Posterior vena cava (tissue), 2 donors: ENCODE measurements at regions of chr1 and their contacts with region 1.

Region 1: DNA sequence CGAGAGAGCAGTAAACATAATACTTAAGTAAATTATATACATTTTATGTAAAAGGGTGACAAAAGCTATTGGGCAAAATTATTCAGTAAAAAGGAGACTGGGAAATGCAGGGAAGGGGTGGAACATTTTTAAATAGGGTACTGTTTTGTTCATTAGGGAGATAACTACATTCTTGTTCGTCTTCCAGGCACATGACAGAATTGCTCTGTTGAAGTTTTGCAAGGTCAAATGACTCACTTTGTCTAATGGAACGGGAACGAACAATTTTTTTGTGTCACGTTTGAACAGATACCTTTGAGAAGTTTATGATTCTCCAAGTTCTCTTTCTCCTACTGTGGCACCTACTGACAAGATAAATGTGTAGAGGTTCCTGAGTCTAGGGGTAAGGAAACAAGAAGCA is 382.3 kb upstream of the ZRANB2 start:
- DNase-seq: no peak

Region 2: GRCh38 chr1:71157151-71157550 is 306.0 kb before region 1 on chr1:
- intact Hi-C with region 1: loop called in 1 of 2 experiments (anchors 10 kb)
- DNase-seq: no peak

Region 3: DNA sequence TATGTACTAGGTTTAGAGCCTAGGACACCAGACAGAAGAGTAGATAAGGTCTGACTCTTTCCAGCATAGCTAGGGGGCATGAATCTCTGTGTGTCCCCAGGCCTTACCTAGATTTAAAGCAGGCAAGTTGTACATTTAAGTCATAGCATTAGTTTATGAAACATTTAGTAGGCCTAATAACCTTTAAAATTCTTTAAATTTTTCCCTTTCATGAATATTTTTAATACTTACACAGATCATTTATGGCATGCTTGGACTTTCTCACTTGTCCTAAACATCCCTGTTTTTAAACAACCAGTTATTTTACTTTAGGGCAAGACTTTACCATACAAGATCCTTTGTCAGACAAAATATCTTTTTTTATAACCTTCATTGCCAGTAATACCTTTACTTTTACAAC is 123.9 kb before region 1 on chr1:
- intact Hi-C with region 1: no loop called
- DNase-seq: no peak